MCF 10A (cell line): ENCODE measurements at regions of chr5 and their contacts with region 1.

Region 1: DNA sequence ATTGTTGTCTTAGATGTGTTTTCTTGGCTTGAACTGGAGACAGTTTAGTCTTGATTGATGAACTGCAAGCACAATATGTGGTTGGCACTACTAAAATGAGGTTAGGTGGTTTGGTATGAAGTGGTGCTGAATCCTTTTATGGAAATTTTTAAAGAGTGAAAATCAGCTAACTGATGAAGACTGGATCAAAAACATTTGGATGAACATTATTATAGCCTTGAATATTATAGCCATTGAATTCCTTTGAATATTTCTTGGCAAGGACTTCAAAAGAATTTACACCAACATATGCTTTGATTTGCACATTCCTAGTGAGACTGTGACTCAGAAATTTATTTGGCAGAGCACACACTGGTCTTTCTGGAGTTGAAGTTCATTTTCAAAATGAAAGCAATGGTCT is 318.3 kb downstream of the CHSY3 start:
- DNase-seq: peak; percentile 80
- H3K4me3 Mint-ChIP-seq: no peak overlapping the region
- H3K27ac Mint-ChIP-seq: no peak overlapping the region
- H3K4me1 Mint-ChIP-seq: peaks cover 6% of the 10 kb centered on the region
- H3K27me3 Mint-ChIP-seq: no peaks in the 10 kb centered on the region
- CTCF ChIP-seq: no peak

Region 2: DNA sequence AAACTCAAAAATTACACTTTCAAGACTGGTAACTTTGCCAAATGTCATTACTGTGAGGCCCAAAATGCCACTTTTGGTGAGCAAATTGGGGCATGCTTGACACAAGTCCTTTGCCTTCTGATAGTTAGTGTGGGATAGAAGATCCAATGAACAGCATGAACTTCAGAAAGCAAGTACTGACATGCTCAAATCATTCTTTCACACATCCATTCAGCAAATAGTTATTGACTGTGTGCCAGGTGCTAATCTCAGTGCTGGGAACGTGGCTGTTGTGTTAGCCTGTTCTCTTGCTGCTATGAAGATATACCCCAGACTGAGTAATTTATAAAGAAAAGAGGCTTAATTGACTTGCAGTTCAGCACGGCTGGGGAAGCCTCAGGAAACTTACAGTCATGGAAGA is 71.3 kb before region 1 on chr5:
- CTCF ChIA-PET with region 1: interaction called, 10 read pairs
- POLR2A ChIA-PET with region 1: no interaction called
- intact Hi-C with region 1: no loop called
- DNase-seq: peak; percentile 66
- H3K4me3 Mint-ChIP-seq: no peak overlapping the region
- H3K27ac Mint-ChIP-seq: peak overlapping the region; percentile 54
- H3K4me1 Mint-ChIP-seq: peaks cover 12% of the 10 kb centered on the region
- H3K27me3 Mint-ChIP-seq: no peaks in the 10 kb centered on the region
- CTCF ChIP-seq: no peak